SK-N-SH (cell line): ENCODE measurements at regions of chr17 and their contacts with region 1.

Region 1: DNA sequence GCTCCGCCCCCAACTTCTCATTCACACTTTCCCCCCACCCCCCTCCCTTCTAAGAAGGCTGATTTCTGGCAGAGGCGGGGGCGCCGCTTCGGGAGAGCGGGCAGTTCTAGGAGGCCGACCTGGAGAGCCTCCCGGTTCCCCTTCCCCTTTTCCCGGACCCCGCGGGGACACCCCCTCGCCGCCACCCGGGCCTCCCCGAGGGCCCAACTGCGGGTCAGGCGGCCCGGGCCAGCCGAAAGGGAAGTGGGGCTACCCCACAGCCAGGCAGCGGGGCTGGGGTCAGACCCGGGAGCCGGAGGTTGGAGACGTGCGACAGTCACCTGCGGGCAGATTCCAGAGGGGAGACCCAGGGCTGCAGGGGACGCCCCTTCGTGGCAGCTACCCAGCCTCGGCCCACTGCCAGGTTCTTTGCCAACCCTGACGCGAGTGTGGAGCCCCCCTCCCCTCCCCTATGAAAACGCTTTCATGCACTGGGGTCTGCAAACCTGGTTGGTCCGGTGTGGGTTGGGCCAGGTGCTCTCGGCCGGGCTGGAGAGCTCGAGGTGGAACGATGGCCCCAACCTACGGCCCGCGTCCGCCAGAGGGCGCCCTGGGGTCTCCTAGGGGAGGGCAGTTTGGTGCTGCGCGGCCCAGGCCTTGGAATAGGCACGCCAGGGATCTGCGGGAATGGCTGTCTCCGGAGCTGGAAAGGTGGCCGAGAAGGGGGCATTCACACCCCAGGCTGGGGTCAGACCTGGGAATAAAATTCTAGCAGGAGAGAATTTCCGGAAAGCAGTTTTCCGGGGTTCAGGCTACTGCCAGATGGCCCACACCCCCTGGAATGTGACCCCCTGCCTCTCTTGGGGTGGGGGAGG is 721 bp upstream of the SOCS3 start:
- DNase-seq: peak; percentile 97
- H3K4me3 ChIP-seq: peak overlapping the region; percentile 70 to 94
- H3K27ac ChIP-seq: peak overlapping the region; percentile 91
- H3K4me1 ChIP-seq: peaks cover 18 to 43% of the 10 kb centered on the region in 2 experiments
- H3K27me3 ChIP-seq: no peaks in the 10 kb centered on the region
- CTCF ChIP-seq: peak; percentile 99
- EP300 ChIP-seq: peak in 1 of 2 experiments; percentile 6; a peak in 1 of 4 replicates
- RAD21 ChIP-seq: peak; percentile 81

Region 2: GRCh38 chr17:78289802-78290363 is 70.7 kb before region 1 on chr17:
- CTCF ChIA-PET with region 1: interaction called, 25 read pairs
- POLR2A ChIA-PET with region 1: no interaction called
- DNase-seq: peak; percentile 89
- H3K4me3 ChIP-seq: no peak overlapping the region
- H3K27ac ChIP-seq: no peak overlapping the region
- H3K4me1 ChIP-seq: peaks cover 0 to 7% of the 10 kb centered on the region in 2 experiments; a peak in 1 of 4 replicates
- H3K27me3 ChIP-seq: no peaks in the 10 kb centered on the region
- CTCF ChIP-seq: peak; percentile 98
- EP300 ChIP-seq: no peak
- RAD21 ChIP-seq: peak; percentile 96

Region 3: GRCh38 chr17:78324391-78325075 is 36.1 kb before region 1 on chr17:
- CTCF ChIA-PET with region 1: interaction called, 14 read pairs
- POLR2A ChIA-PET with region 1: no interaction called
- DNase-seq: peak; percentile 89
- H3K4me3 ChIP-seq: no peak overlapping the region
- H3K27ac ChIP-seq: peak overlapping the region; percentile 62 to 92
- H3K4me1 ChIP-seq: peaks cover 32 to 33% of the 10 kb centered on the region in 2 experiments; a peak in 3 of 4 replicates
- H3K27me3 ChIP-seq: no peaks in the 10 kb centered on the region
- CTCF ChIP-seq: no peak
- EP300 ChIP-seq: no peak
- RAD21 ChIP-seq: no peak

Region 4: GRCh38 chr17:78378225-78379130 is 17.9 kb after region 1 on chr17 and contains the start of gene PGS1:
- CTCF ChIA-PET with region 1: interaction called, 175 read pairs
- POLR2A ChIA-PET with region 1: interaction called, 7 read pairs
- DNase-seq: peak; percentile 97
- H3K4me3 ChIP-seq: peak within 1 kb of the TSS; percentile 87 to 88
- H3K27ac ChIP-seq: peak within 1 kb of the TSS; percentile 64 to 81
- H3K4me1 ChIP-seq: peaks cover 16 to 57% of the 10 kb centered on the region in 2 experiments
- H3K27me3 ChIP-seq: no peaks in the 10 kb centered on the region
- CTCF ChIP-seq: no peak
- EP300 ChIP-seq: peak in 1 of 2 experiments; percentile 83; a peak in 1 of 4 replicates
- RAD21 ChIP-seq: peak; percentile 3; the same call in 1 of the 2 replicates
- polyA plus RNA-seq, gene PGS1: 88.4 and 106 TPM in 2 replicates

Region 5: DNA sequence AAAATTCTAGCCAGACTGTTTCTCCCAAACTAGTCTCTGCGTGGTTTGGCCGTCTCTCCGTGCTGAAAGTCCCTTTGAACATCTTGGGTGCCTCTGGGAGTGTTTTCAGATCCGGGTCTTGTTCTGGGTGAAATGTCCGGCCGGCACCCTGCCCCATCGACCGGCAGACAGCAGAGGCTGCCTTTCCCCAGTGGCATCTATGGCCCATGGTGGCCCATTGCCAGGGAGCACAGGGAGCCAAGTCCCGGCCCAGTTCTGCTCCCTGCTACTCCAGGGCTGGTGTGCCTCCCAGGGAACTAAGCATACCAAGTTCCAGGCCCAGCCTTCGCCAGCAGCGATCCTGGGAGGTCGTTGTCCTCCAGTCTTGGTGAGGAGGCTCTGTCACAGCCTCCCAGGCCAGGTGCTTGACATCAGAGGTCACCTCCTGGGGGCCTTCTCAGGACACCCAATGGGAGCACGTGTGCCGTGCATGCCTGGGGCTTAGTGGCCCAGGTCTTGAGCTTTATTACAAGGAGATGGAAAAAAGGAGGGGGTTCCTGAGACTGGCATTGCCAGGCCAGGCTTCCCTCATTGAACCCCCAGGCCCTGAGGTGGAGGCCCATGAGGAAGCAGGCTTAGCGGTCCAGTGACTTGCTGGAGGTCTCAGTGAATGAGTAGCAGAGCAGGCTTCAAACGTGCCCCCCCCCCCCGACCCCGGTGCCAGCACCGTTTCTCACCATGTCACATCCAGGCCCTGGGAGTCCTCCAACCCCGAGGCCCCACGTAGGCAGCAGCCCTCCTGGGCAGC is 71.8 kb after region 1 on chr17:
- CTCF ChIA-PET with region 1: interaction called, 11 read pairs
- POLR2A ChIA-PET with region 1: no interaction called
- DNase-seq: no peak
- H3K4me3 ChIP-seq: no peak overlapping the region
- H3K27ac ChIP-seq: no peak overlapping the region
- H3K4me1 ChIP-seq: peaks cover 0 to 13% of the 10 kb centered on the region in 2 experiments; a peak in 1 of 4 replicates
- H3K27me3 ChIP-seq: no peaks in the 10 kb centered on the region
- CTCF ChIP-seq: no peak
- EP300 ChIP-seq: no peak
- RAD21 ChIP-seq: no peak

Region 6: DNA sequence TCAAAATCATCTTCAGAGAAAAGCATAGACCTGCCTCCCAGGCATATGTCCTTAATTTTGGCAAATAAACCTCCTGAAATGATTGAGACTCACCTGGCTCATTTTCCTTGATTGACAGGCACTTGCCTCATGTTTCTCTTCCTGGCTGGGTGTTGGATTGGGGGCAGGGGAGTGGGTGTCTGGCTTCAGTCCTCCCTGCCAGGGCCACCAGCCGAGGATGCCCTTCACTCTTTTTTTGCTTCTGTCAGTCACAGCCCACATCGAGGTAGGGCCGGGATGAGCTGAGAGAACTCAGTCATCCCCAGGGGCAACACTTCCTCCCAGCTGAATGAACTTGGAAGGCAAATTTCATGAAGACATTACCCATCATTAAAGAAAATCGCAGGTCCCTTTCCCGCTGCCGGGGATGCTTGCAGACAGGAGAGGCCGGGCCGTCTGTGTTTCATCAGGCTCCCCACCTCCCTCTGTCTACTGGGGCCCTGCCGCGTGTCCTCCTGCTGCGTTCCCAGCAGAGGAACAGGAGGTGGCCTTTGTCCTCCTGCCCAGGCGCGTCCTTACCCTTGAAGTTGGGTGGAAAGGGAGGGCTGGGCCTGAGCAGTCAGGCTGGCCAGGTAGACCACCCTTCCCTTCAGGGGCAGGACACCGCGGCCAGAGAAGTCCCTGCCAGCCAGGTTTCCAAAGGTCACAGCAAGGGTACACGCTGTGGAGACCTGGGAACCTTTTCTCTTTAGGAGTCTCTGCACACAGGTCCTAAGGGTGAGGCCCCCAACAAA is 227.8 kb after region 1 on chr17:
- CTCF ChIA-PET with region 1: no interaction called
- POLR2A ChIA-PET with region 1: no interaction called
- DNase-seq: no peak
- H3K4me3 ChIP-seq: no peak overlapping the region
- H3K27ac ChIP-seq: no peak overlapping the region
- H3K4me1 ChIP-seq: peaks cover 14 to 16% of the 10 kb centered on the region in 2 experiments
- H3K27me3 ChIP-seq: no peaks in the 10 kb centered on the region
- CTCF ChIP-seq: no peak
- EP300 ChIP-seq: no peak
- RAD21 ChIP-seq: no peak